ENCODE measurements at regions of chr14 and their contacts with region 1.

Region 1: GRCh38 chr14:106268013-106268727 is 741.8 kb downstream of the TMEM121 start:
- DNase-seq: peak; percentile 97
- H3K4me3 Mint-ChIP-seq: no peak overlapping the region
- H3K27ac Mint-ChIP-seq: no peak overlapping the region
- H3K4me1 Mint-ChIP-seq: peaks cover 10% of the 10 kb centered on the region
- H3K27me3 Mint-ChIP-seq: peaks cover 4% of the 10 kb centered on the region

Region 2: GRCh38 chr14:106210652-106211051 is 57.5 kb before region 1 on chr14:
- CTCF ChIA-PET with region 1: interaction called, 5 read pairs
- intact Hi-C with region 1: loop called (anchors 2 kb)
- DNase-seq: peak; percentile 77
- H3K4me3 Mint-ChIP-seq: no peak overlapping the region
- H3K27ac Mint-ChIP-seq: no peak overlapping the region
- H3K4me1 Mint-ChIP-seq: peaks cover 21% of the 10 kb centered on the region
- H3K27me3 Mint-ChIP-seq: no peaks in the 10 kb centered on the region

Region 3: DNA sequence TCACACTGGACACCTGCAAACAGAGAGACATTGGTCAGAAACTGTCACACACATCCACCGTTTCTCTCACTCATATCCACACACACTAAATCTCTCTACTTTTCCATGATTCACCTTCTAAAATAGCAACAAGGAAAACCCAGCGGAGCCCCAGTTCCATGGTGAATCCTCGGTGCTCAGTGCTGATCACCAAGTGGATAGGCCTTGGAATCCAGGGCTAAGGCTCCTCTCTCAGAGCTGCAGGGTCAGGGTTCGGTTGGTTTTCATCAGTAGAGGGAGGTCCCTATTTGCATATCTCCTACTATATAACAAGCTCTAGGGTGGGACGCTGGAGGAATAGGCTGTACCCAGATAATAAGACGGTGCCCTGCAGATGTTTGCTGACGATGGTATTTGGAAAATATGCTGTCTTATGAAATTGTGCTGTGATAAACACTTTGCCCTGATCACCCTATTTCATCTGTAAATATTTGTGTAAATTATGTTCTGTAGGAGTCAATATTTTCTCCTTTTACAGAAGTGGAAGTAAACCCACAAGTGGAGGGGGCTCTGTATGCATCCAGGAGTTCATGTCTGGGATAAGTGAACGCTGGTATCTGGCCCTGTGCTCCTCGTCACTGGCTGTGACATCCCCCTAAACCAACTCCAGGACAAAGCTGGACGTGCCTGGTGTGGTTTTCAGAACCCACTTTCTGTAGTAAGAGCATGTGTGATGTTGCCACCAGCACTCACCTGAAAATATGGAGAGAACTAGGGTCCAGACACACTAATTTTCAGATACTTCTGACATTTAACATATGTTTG is 32.6 kb before region 1 on chr14:
- CTCF ChIA-PET with region 1: interaction called, 4 read pairs
- intact Hi-C with region 1: loop called (anchors 1 kb)
- DNase-seq: no peak
- H3K4me3 Mint-ChIP-seq: no peak overlapping the region
- H3K27ac Mint-ChIP-seq: peak overlapping the region; percentile 22
- H3K4me1 Mint-ChIP-seq: peaks cover 26% of the 10 kb centered on the region
- H3K27me3 Mint-ChIP-seq: no peaks in the 10 kb centered on the region

Measured in activated naive CD4-positive, alpha-beta T cell treated with anti-CD3 and anti-CD28 coated beads for 36 hours (primary cell).